ENCODE measurements at regions of chr1 and their contacts with region 1.

Region 1: GRCh38 chr1:6794164-6794563 is 8.9 kb downstream of the CAMTA1 start:
- DNase-seq: no peak
- H3K4me3 ChIP-seq: no peak overlapping the region
- H3K27ac ChIP-seq: no peak overlapping the region
- H3K4me1 ChIP-seq: no peaks in the 10 kb centered on the region
- H3K27me3 ChIP-seq: no peaks in the 10 kb centered on the region
- CTCF ChIP-seq: peak; percentile 29

Region 2: DNA sequence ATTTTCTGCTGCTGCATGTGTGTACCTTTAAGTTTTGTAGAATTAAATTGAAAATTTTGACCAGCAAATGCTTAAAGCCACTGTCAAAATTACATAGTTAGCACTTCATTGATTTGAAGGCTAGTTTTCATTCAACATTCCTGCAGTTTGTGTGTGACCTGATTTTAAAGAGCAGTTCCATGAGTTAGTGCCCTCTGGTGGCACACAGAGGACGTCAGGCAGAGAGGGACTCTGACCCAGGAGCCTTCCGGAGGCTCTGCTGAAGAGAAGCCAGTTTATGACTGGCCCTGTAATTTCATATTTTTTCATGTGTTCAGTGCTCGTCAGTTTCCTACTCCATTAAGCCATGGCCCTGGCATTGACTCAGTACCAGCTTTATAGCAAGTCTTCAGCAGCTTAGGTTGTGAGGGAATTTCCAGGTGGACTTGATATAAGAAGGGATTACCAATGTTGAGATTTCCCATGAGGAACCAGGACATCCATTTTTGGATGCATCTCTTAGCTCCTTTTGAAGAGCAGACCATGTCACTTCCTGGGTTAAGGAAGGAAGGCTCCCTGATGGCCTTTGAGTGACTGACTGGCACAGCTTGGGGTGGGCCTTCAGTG is 95.8 kb after region 1 on chr1:
- intact Hi-C with region 1: loop called (anchors 5 kb)
- DNase-seq: peak; percentile 69
- H3K4me3 ChIP-seq: no peak overlapping the region
- H3K27ac ChIP-seq: no peak overlapping the region
- H3K4me1 ChIP-seq: no peaks in the 10 kb centered on the region
- H3K27me3 ChIP-seq: no peaks in the 10 kb centered on the region
- CTCF ChIP-seq: peak; percentile 74

Region 3: DNA sequence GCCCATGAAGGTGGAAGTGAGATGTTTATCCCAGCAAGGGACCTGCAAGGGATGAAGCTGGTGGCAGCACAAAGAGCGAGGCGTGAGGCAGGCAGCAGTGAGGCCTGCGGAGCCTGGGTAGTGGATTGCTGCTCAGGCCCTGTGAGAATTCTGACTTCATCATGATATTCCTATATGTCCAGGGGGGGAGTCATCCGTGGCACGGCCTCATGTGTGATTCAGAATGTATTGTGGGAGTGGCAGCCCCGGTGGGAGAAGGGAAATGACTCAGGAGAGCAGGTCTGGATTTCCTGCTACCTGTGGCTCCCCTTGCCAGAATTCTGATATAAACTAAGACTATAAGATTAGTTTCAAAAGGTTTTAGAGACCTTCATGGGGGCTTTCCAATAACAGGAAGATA is 232.0 kb after region 1 on chr1:
- intact Hi-C with region 1: no loop called
- DNase-seq: no peak
- H3K4me3 ChIP-seq: no peak overlapping the region
- H3K27ac ChIP-seq: no peak overlapping the region
- H3K4me1 ChIP-seq: no peaks in the 10 kb centered on the region
- H3K27me3 ChIP-seq: no peaks in the 10 kb centered on the region
- CTCF ChIP-seq: no peak

Region 4: DNA sequence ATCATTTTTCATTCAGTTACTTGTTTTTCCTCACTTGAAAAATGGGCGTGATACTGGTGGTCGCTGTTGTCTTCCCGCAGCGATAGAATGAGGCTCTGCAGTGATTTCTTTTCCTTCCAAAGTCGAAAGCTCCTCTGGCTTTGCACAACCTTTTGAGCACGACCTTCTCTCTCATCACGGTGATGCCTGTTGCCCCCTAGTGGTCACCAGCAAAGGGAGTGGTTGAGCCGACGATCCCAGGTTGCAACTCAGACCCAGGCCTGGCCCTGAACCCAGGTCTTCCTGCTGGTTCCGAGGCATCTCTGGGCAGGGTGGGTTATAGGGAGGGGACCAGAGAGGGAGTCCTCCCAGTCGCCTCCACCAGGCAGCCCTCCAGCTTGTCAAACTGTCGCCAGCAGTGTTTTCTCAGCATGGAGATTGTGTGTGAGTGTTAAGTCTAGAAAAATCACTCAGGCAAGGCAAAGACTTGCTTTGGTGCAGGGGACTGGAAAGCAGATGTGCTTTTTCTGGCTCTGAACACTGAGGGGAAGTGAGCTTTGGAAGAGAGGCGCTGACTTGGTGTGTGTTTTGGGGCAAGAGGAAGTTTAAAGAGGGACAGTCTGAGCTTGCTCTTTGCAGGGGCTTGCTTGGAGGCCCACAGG is 276.3 kb after region 1 on chr1:
- intact Hi-C with region 1: loop called (anchors 5 kb)
- DNase-seq: peak; percentile 59
- H3K4me3 ChIP-seq: peak overlapping the region; percentile 4
- H3K27ac ChIP-seq: no peak overlapping the region
- H3K4me1 ChIP-seq: no peaks in the 10 kb centered on the region
- H3K27me3 ChIP-seq: no peaks in the 10 kb centered on the region
- CTCF ChIP-seq: peak; percentile 80